CD4-positive, alpha-beta T cell (primary cell): ENCODE measurements at regions of chr2 and their contacts with region 1.

Region 1: DNA sequence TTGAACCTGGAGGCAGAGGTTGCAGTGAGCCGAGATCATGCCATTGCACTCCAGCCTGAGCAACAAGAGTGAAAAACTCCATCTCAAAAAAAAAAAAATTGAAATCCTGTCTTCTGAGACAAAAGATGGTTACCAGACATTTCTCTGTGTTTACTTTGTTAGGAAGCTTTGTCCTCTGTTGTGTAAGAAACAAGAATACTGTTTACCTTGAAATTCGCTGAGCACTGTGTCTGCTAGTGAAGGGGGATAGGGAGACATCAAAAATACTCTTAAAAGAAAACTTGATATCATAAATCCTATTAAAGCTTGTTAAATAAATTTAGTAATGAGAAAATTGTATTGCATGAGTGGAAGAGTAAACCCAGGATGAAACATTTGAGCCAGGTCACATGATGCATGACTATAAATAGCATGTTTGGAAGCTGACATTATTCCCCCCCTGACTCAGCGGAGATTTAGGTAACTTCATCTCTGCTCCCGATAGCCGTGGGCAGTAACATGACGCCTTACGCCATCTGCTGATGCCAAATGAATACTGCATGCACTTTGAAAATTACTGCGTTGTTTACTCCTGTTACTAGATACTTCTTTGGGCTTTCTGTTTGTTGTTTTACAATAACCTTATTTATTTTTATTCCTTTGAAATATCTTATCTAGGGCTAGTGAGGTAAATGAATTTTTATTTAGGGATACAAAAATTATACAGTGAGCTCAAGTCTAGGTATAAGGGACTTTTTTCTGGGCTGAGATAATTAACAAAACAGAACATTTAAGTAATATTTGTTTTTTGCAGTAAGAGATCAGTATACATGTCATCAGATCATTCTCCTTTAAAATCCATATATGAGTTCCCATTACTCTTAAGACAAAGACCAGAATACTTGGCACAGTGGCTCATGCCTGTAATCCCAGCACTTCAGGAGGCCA is 134.9 kb downstream of the MAP3K20 start:
- DNase-seq: peak in 13 of 14 experiments; percentile 6 to 77 (median 16)
- ATAC-seq: peak; percentile 79
- H3K4me3 ChIP-seq: no peak overlapping the region
- H3K4me3 Mint-ChIP-seq: no peak overlapping the region
- H3K27ac ChIP-seq: no peak overlapping the region
- H3K27ac Mint-ChIP-seq: no peak overlapping the region
- H3K4me1 ChIP-seq: no peaks in the 10 kb centered on the region
- H3K4me1 Mint-ChIP-seq: no peaks in the 10 kb centered on the region
- H3K27me3 ChIP-seq: no peaks in the 10 kb centered on the region
- H3K27me3 Mint-ChIP-seq: no peaks in the 10 kb centered on the region
- CTCF ChIP-seq: peak; percentile 78

Region 2: GRCh38 chr2:172806493-172806892 is 404.0 kb before region 1 on chr2:
- CTCF ChIA-PET with region 1: no interaction called
- POLR2A ChIA-PET with region 1: no interaction called
- intact Hi-C with region 1: loop called (anchors 1 to 2 kb)
- DNase-seq: peak in 4 of 14 experiments; percentile 5 to 35 (median 24)
- ATAC-seq: no peak
- H3K4me3 ChIP-seq: no peak overlapping the region
- H3K4me3 Mint-ChIP-seq: no peak overlapping the region
- H3K27ac ChIP-seq: no peak overlapping the region
- H3K27ac Mint-ChIP-seq: no peak overlapping the region
- H3K4me1 ChIP-seq: peaks cover 3% of the 10 kb centered on the region
- H3K4me1 Mint-ChIP-seq: peaks cover 7% of the 10 kb centered on the region
- H3K27me3 ChIP-seq: no peaks in the 10 kb centered on the region
- H3K27me3 Mint-ChIP-seq: peaks cover 5% of the 10 kb centered on the region
- CTCF ChIP-seq: peak; percentile 84

Region 3: GRCh38 chr2:172864182-172864581 is 346.4 kb before region 1 on chr2:
- CTCF ChIA-PET with region 1: no interaction called
- POLR2A ChIA-PET with region 1: no interaction called
- intact Hi-C with region 1: loop called (anchors 1 to 2 kb)
- DNase-seq: peak in 13 of 14 experiments; percentile 3 to 65 (median 15)
- ATAC-seq: no peak
- H3K4me3 ChIP-seq: no peak overlapping the region
- H3K4me3 Mint-ChIP-seq: no peak overlapping the region
- H3K27ac ChIP-seq: no peak overlapping the region
- H3K27ac Mint-ChIP-seq: no peak overlapping the region
- H3K4me1 ChIP-seq: no peaks in the 10 kb centered on the region
- H3K4me1 Mint-ChIP-seq: no peaks in the 10 kb centered on the region
- H3K27me3 ChIP-seq: peaks cover 0 to 3% of the 10 kb centered on the region in 2 experiments
- H3K27me3 Mint-ChIP-seq: peaks cover 23% of the 10 kb centered on the region
- CTCF ChIP-seq: peak; percentile 46

Region 4: DNA sequence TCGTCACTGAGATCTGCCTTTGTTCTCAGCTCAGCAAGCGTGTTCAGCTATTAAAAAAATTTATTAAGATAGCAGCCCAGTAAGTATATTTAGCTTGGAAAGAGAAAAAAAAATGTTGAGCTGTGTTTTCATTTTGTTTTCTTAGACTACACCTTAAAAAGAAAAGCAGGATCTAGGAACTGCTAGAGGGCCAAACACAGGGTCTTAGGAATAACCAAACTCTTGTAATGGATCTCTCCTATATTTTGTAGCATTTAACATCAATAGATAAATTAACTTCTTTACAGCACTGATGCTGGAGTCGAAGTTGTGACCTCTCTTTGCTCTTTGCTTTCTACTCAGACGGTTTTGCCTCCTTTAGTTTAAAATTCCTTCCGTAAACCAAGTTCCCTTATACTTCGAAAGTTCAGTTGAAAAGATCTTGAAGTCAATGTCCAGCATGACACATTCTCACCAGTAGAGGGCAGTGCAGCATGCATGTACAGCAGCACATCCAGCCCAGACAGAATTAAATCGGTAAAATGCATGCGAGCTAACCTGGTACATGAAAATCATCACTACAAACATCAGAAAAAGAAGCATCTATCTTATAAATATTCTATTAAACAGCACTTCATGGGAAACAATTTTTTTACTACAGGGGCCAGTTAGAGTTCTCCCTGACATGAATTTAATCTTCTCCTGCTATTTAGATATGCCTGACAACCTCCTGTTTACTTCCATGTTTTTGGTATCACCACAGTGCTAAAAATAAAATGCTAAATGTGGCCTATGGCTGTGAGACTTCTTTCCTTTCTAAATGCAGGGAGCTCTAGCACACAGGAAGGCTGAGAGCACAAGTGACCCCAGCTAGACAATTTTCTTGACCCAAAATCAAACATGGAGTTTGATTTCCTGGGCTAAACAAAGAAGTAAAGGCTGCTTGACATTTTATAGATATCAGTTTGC is 183.1 kb before region 1 on chr2:
- CTCF ChIA-PET with region 1: interaction called, 18 read pairs
- POLR2A ChIA-PET with region 1: no interaction called
- intact Hi-C with region 1: loop called (anchors 1 kb)
- DNase-seq: peak; percentile 41 to 88 (median 62)
- ATAC-seq: peak; percentile 86
- H3K4me3 ChIP-seq: no peak overlapping the region
- H3K4me3 Mint-ChIP-seq: no peak overlapping the region
- H3K27ac ChIP-seq: no peak overlapping the region
- H3K27ac Mint-ChIP-seq: no peak overlapping the region
- H3K4me1 ChIP-seq: no peaks in the 10 kb centered on the region
- H3K4me1 Mint-ChIP-seq: no peaks in the 10 kb centered on the region
- H3K27me3 ChIP-seq: no peaks in the 10 kb centered on the region
- H3K27me3 Mint-ChIP-seq: peaks cover 6% of the 10 kb centered on the region
- CTCF ChIP-seq: peak; percentile 96

Region 5: DNA sequence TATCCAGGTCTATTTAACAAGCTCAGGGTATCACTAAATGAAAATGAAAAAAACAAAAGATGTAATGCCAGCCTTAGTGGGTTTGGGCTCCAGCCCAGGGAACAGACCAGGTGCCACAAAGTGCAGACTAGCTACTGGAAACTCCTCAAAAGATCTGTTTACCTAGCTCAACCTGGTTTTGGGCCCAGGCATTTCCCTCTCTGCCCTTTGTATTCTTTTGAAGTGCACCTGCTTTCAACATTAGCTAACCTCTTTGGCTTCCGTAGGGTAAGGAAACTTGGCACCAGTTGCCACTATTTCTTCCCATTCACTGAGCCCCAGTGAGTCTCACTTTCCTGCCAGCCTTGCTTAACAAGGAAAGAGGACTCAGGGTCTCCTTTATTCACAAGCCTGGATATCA is 20.5 kb after region 1 on chr2:
- CTCF ChIA-PET with region 1: no interaction called
- POLR2A ChIA-PET with region 1: no interaction called
- intact Hi-C with region 1: no loop called
- DNase-seq: no peak
- ATAC-seq: no peak
- H3K4me3 ChIP-seq: no peak overlapping the region
- H3K4me3 Mint-ChIP-seq: no peak overlapping the region
- H3K27ac ChIP-seq: no peak overlapping the region
- H3K27ac Mint-ChIP-seq: no peak overlapping the region
- H3K4me1 ChIP-seq: no peaks in the 10 kb centered on the region
- H3K4me1 Mint-ChIP-seq: peaks cover 9% of the 10 kb centered on the region
- H3K27me3 ChIP-seq: no peaks in the 10 kb centered on the region
- H3K27me3 Mint-ChIP-seq: peaks cover 5% of the 10 kb centered on the region
- CTCF ChIP-seq: no peak